Endothelial cell of umbilical vein (primary cell): ENCODE measurements at regions of chr10 and their contacts with region 1.

Region 1: DNA sequence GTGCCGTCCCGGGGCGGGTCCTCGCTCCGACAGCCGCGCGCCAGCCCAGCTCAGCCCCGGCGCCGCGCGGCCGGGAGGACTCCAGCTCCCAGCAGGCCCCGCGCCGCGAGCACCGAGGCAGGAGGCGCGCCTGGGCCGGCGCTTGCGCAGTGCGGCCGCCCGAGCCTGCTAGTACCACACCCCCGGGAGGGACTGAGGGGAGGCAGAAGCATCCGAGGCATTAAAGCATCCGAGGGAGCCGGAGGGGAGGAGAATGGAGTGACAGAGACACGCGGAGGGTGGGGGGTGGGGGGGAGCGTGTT is at the start of gene GRK5:
- DNase-seq: peak; percentile 95
- H3K4me3 ChIP-seq: peak within 1 kb of the TSS; percentile 68 to 90 (median 74)
- H3K27ac ChIP-seq: peak within 1 kb of the TSS; percentile 92
- H3K4me1 ChIP-seq: peaks cover 61% of the 10 kb centered on the region
- H3K27me3 ChIP-seq: no peaks in the 10 kb centered on the region
- CTCF ChIP-seq: no peak
- POLR2A ChIP-seq: no peak
- total RNA-seq, gene GRK5: 29.1 and 29.5 TPM in 2 replicates

Region 2: DNA sequence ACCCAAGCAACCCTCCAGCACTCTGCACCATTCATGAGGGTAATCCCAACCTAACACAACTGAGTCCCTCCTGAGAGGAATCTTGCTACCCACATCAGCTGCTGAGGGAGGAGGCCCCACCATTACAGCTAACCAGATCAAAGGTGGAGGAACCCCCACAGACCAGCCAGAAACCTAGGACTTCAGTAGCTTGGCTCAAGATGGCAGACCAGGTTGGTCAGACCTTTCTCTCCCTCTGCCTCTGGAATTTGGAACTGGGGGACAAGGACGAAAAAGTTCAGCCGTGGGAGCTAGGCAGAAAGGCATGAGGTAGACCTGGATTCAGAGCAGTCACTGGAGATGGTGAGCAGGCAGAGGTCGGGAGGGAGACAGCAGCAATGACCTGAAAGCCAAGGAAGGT is 351.2 kb before region 1 on chr10:
- CTCF ChIA-PET with region 1: no interaction called
- POLR2A ChIA-PET with region 1: no interaction called
- dilution Hi-C with region 1: no loop called
- intact Hi-C with region 1: no loop called
- DNase-seq: no peak
- H3K4me3 ChIP-seq: no peak overlapping the region
- H3K27ac ChIP-seq: no peak overlapping the region
- H3K4me1 ChIP-seq: no peaks in the 10 kb centered on the region
- H3K27me3 ChIP-seq: peaks cover 0 to 2% of the 10 kb centered on the region in 2 experiments
- CTCF ChIP-seq: no peak
- POLR2A ChIP-seq: no peak

Region 3: GRCh38 chr10:118970770-118971169 is 236.5 kb before region 1 on chr10:
- CTCF ChIA-PET with region 1: no interaction called
- POLR2A ChIA-PET with region 1: no interaction called
- dilution Hi-C with region 1: no loop called
- intact Hi-C with region 1: no loop called
- DNase-seq: no peak
- H3K4me3 ChIP-seq: no peak overlapping the region
- H3K27ac ChIP-seq: no peak overlapping the region
- H3K4me1 ChIP-seq: no peaks in the 10 kb centered on the region
- H3K27me3 ChIP-seq: peaks cover 0 to 8% of the 10 kb centered on the region in 2 experiments
- CTCF ChIP-seq: no peak
- POLR2A ChIP-seq: no peak

Region 4: DNA sequence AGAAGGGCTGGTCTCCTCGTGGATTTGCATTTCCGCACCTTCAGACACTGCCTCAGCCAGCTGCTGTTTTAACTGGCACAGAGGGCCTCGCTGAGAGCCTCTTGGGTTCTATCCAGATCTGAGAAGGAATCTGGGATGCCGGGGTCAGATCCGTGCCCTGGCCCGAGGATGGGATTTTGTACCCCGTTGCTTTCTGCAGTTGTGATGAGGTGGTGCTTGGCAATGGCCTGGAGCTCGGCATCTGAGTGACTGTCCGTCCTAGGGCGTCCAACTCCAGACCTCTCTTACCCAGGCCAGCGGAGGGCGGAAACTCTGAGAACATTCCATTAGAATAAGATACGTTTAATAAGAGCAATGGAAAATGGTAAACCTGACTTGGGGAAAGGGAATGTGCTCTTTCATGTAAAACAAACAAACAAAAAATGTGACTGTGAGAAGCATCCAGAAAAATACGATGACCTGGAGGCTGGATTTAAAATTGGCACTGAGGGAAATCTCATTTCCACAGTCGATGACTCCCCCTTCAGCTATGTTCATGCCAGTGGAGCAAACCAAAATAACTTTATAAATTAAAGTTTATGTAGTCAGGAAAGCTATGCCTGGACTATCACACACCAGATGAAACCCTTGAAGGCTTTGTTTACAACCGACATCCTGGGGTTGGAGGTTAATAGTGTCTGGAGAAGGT is 39.7 kb after region 1 on chr10:
- CTCF ChIA-PET with region 1: interaction called, 25 read pairs
- POLR2A ChIA-PET with region 1: interaction called, 3 read pairs
- dilution Hi-C with region 1: no loop called
- intact Hi-C with region 1: loop called (anchors 1 kb)
- DNase-seq: peak; percentile 90
- H3K4me3 ChIP-seq: no peak overlapping the region
- H3K27ac ChIP-seq: peak overlapping the region; percentile 54
- H3K4me1 ChIP-seq: peaks cover 40% of the 10 kb centered on the region
- H3K27me3 ChIP-seq: no peaks in the 10 kb centered on the region
- CTCF ChIP-seq: no peak
- POLR2A ChIP-seq: no peak

Region 5: GRCh38 chr10:119290291-119291048 is 83.2 kb after region 1 on chr10:
- CTCF ChIA-PET with region 1: interaction called, 11 read pairs
- POLR2A ChIA-PET with region 1: no interaction called
- dilution Hi-C with region 1: no loop called
- intact Hi-C with region 1: no loop called
- DNase-seq: no peak
- H3K4me3 ChIP-seq: no peak overlapping the region
- H3K27ac ChIP-seq: no peak overlapping the region
- H3K4me1 ChIP-seq: peaks cover 2% of the 10 kb centered on the region
- H3K27me3 ChIP-seq: no peaks in the 10 kb centered on the region
- CTCF ChIP-seq: no peak
- POLR2A ChIP-seq: no peak

Region 6: GRCh38 chr10:119360181-119360921 is 153.0 kb after region 1 on chr10:
- CTCF ChIA-PET with region 1: interaction called, 17 read pairs
- POLR2A ChIA-PET with region 1: no interaction called
- dilution Hi-C with region 1: no loop called
- intact Hi-C with region 1: no loop called
- DNase-seq: no peak
- H3K4me3 ChIP-seq: no peak overlapping the region
- H3K27ac ChIP-seq: no peak overlapping the region
- H3K4me1 ChIP-seq: no peaks in the 10 kb centered on the region
- H3K27me3 ChIP-seq: no peaks in the 10 kb centered on the region
- CTCF ChIP-seq: no peak
- POLR2A ChIP-seq: no peak

Region 7: GRCh38 chr10:119421887-119422681 is 214.8 kb after region 1 on chr10:
- CTCF ChIA-PET with region 1: interaction called, 98 read pairs
- POLR2A ChIA-PET with region 1: no interaction called
- dilution Hi-C with region 1: no loop called
- intact Hi-C with region 1: loop called (anchors 1 kb)
- DNase-seq: no peak
- H3K4me3 ChIP-seq: no peak overlapping the region
- H3K27ac ChIP-seq: no peak overlapping the region
- H3K4me1 ChIP-seq: no peaks in the 10 kb centered on the region
- H3K27me3 ChIP-seq: no peaks in the 10 kb centered on the region
- CTCF ChIP-seq: no peak
- POLR2A ChIP-seq: no peak

Region 8: DNA sequence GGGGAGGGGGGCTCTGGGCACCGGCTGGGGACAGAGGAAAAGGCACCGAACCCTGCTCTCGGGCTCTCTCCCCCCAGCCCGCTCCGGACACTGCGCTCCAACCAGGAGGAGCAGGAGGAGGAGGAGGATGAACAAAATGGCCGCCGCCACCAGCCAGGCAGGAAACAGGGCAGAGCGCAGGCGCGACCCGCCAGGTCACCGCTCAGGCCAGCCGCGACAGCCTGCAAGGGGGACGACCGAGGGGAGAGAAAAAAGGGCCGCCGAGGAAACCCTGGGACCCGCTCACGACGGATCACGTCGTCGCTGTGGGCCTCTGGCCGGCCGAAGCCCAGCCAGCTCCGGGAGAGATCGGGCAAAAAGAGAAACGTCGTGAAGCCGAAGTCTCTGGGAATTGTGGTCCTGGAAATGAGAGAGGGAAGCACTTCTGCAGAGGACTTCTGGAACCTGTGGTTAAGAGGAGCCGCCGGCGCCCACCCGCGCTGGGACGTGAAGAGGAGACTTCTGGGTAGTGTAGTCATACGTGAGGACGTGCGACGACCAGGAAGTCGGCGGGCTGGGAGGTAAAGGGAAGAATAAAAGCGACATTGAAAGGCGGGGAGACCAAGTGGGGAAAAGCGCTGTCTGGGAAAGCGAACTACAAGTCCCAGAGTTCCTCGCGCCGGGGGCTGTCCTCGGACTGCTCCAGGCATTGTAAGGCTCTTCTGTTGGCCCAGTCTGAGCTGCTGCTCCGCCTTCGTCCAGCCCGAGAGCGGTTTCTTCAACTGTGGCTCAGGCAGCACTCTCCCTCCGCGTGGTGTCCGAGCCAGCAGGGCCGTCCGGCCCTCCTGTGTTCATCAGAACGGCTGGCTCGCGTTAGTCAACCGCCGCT is 389.5 kb after region 1 on chr10 and contains the start of gene TIAL1:
- CTCF ChIA-PET with region 1: interaction called, 7 read pairs
- POLR2A ChIA-PET with region 1: no interaction called
- dilution Hi-C with region 1: no loop called
- intact Hi-C with region 1: loop called (anchors 1 kb)
- DNase-seq: peak; percentile 100
- H3K4me3 ChIP-seq: peak within 1 kb of the TSS; percentile 85 to 97 (median 97)
- H3K27ac ChIP-seq: peak within 1 kb of the TSS; percentile 95
- H3K4me1 ChIP-seq: peaks cover 41% of the 10 kb centered on the region
- H3K27me3 ChIP-seq: no peaks in the 10 kb centered on the region
- CTCF ChIP-seq: no peak
- POLR2A ChIP-seq: peak; percentile 96
- total RNA-seq, gene TIAL1: 150 and 154 TPM in 2 replicates